GM23248 (cell line): ENCODE measurements at regions of chr4 and their contacts with region 1.

Region 1: DNA sequence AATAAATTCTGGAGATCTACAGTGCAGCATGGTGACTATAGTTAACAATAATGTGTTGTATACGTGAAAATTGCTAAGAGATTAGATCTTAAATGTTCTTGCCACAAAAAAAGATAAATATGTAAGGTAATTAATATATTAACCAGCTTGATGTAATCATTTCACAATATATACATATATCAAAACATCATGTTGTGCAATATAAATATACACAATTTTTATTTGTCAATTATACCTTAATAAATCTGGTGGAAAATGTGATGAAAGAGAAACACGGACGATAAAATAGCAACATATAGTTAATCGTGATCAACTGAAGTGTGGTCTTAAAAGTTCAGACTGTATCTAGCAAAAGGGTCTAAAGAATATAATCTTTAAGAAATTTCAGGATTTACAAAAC is 16.5 kb upstream of the NDNF start:
- DNase-seq: no peak
- H3K4me3 ChIP-seq: no peak overlapping the region
- H3K27ac ChIP-seq: no peak overlapping the region
- H3K4me1 ChIP-seq: no peaks in the 10 kb centered on the region
- H3K27me3 ChIP-seq: no peaks in the 10 kb centered on the region

Region 2: DNA sequence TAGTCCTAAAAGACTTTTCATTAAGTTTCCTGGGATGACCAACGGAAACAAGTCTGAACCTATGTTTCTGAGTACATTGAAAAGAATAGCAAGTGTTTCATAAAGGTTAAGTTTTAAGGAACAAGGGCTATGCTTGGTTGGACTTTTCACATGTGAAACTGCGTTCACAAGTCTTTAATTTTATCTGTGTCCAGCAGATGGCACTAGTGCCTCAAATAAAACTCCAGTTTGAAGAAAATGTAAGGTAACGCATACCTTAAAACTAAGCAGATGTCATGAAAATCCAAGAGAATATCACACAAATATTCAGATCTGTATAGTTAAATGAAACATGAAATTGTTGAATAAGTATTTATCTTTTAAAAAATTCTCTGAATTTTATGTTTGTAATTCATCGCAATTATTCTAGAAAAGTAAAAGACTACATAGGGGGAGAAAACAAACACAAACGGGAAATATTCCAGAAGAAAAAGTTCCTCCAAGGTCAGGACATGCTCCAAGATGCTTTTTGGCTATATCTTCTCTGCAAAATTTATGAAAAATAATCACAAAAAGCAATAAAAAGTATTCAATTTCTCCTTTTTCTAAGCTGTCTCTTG is 932.6 kb before region 1 on chr4:
- in situ Hi-C with region 1: loop called (anchors 10 kb)
- DNase-seq: peak; percentile 60
- H3K4me3 ChIP-seq: no peak overlapping the region
- H3K27ac ChIP-seq: no peak overlapping the region
- H3K4me1 ChIP-seq: no peaks in the 10 kb centered on the region
- H3K27me3 ChIP-seq: no peaks in the 10 kb centered on the region

Region 3: GRCh38 chr4:120785202-120785601 is 303.7 kb before region 1 on chr4:
- in situ Hi-C with region 1: no loop called
- DNase-seq: no peak
- H3K4me3 ChIP-seq: no peak overlapping the region
- H3K27ac ChIP-seq: no peak overlapping the region
- H3K4me1 ChIP-seq: no peaks in the 10 kb centered on the region
- H3K27me3 ChIP-seq: no peaks in the 10 kb centered on the region